ENCODE measurements at regions of chr14 and their contacts with region 1.

Region 1: DNA sequence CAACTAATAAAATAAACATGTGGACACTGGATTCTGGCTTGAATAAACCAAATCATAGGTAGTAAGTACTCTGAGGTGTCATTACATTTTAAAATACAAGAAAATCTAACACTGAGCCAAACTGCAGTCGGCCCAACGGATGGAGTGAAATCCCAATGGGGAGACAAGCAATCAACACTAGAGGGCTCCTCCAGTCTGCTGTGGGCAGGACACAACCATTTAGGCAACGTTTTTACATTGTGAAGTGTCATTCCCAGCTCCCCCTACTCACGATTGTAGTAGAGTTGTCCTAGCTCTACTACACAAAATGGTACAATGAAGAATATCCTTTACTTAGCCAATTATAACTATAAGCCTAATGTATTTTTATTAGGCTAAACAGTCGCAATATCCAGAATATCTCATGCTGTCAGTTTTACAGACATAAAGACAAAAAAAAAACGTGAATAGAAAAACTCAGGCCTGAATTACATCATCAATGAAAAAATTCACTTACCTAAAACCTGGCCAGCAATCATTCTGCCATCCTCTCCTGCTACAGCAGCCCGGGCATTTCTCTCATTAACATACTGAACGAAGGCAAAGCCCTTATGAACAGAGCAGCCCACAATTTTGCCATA is 35.7 kb downstream of the HNRNPC start:
- DNase-seq: no peak
- H3K4me3 Mint-ChIP-seq: no peak overlapping the region
- H3K27ac Mint-ChIP-seq: peak overlapping the region; percentile 62
- H3K4me1 Mint-ChIP-seq: peaks cover 89% of the 10 kb centered on the region
- H3K27me3 Mint-ChIP-seq: no peaks in the 10 kb centered on the region

Region 2: DNA sequence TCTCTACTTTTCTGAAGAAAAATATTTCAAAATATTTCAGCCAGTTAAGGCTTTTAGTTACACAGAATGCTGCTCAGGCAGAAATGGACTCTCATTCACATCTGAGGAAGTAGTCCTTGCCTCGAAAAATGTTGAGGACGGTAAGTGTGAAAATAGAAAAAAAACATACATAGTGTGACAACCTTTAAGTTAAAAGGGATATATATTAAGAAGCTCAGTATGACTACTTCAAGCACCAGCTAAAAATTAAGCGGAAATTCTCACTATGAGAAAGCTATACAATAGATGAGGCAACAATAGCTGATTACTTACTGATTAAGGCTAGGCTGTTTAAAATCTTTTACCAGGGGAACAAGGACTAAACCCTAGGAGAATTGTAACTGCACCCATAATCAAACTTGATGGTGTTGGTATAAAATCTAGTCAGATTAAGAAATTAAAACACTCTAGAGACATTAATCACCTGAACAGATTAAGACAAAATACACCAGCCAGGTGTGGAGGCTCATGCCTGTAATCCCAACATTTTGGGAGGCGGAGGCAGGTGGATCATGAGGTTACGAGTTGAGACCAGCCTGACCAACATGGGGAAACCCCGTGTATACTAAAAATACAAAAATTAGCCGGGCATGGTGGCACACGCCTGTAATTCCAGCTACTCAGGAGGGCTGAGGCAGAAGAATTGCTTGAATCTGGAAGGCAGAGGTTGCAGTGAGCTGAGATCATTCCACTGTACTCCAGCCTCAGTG is 18.3 kb before region 1 on chr14:
- CTCF ChIA-PET with region 1: interaction called, 6 read pairs
- POLR2A ChIA-PET with region 1: interaction called, 24 read pairs
- DNase-seq: no peak
- H3K4me3 Mint-ChIP-seq: no peak overlapping the region
- H3K27ac Mint-ChIP-seq: peak overlapping the region; percentile 69
- H3K4me1 Mint-ChIP-seq: peaks cover 56% of the 10 kb centered on the region
- H3K27me3 Mint-ChIP-seq: no peaks in the 10 kb centered on the region

Region 3: GRCh38 chr14:21257394-21257909 is 23.9 kb after region 1 on chr14:
- CTCF ChIA-PET with region 1: interaction called, 5 read pairs
- POLR2A ChIA-PET with region 1: interaction called, 22 read pairs
- DNase-seq: no peak
- H3K4me3 Mint-ChIP-seq: peak overlapping the region; percentile 22
- H3K27ac Mint-ChIP-seq: peak overlapping the region; percentile 65
- H3K4me1 Mint-ChIP-seq: peaks cover 74% of the 10 kb centered on the region
- H3K27me3 Mint-ChIP-seq: no peaks in the 10 kb centered on the region

Region 4: DNA sequence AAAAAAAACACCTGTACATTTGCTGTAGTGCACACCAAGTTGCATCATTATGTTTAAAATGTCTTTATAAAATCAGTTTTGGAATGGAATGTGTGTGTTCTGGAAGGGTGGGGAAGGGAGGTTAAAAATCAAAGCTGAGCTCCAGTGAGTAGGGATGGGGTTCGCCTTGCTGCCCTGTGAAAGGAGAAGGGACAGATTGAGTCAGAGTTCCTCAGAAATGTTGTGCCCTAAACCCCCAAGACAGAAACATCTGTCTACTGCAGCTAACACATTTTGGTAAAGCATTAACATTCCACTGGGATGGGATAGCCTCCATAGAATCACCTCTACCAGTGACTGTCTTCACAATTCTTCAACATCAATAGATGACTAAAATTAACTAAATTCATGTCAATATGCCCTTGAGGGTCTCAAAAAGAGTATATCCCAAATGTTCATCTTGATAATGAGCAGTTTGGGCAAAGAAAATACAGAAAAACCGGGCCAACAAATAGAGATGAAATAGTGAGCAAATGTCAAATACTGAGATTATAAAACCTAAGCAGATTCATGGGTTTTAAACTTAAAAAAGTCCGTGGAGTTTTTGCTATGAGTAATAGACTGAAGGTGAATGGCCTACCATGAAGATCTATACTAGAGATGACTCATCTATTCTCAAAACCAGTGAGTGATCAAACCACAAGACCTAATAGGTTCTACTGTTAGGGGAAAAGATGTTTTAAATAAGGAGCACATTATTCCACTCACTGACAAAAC is 30.3 kb after region 1 on chr14:
- CTCF ChIA-PET with region 1: interaction called, 4 read pairs
- POLR2A ChIA-PET with region 1: interaction called, 64 read pairs
- DNase-seq: no peak
- H3K4me3 Mint-ChIP-seq: peak overlapping the region; percentile 61
- H3K27ac Mint-ChIP-seq: peak overlapping the region; percentile 99
- H3K4me1 Mint-ChIP-seq: peaks cover 75% of the 10 kb centered on the region
- H3K27me3 Mint-ChIP-seq: no peaks in the 10 kb centered on the region

Region 5: GRCh38 chr14:21269252-21270046 is 35.9 kb after region 1 on chr14 and contains the start of gene HNRNPC:
- CTCF ChIA-PET with region 1: interaction called, 4 read pairs
- POLR2A ChIA-PET with region 1: interaction called, 64 read pairs
- DNase-seq: peak; percentile 100
- H3K4me3 Mint-ChIP-seq: peak within 1 kb of the TSS; percentile 99
- H3K27ac Mint-ChIP-seq: peak within 1 kb of the TSS; percentile 99
- H3K4me1 Mint-ChIP-seq: peaks cover 36% of the 10 kb centered on the region
- H3K27me3 Mint-ChIP-seq: no peaks in the 10 kb centered on the region
- total RNA-seq, gene HNRNPC: 689 to 710 TPM

Region 6: GRCh38 chr14:21395444-21395843 is 161.9 kb after region 1 on chr14:
- CTCF ChIA-PET with region 1: no interaction called
- POLR2A ChIA-PET with region 1: no interaction called
- DNase-seq: no peak
- H3K4me3 Mint-ChIP-seq: no peak overlapping the region
- H3K27ac Mint-ChIP-seq: no peak overlapping the region
- H3K4me1 Mint-ChIP-seq: no peaks in the 10 kb centered on the region
- H3K27me3 Mint-ChIP-seq: no peaks in the 10 kb centered on the region